Posterior cingulate gyrus (tissue), 11 donors: ENCODE measurements at regions of chr10 and their contacts with region 1.

Region 1: DNA sequence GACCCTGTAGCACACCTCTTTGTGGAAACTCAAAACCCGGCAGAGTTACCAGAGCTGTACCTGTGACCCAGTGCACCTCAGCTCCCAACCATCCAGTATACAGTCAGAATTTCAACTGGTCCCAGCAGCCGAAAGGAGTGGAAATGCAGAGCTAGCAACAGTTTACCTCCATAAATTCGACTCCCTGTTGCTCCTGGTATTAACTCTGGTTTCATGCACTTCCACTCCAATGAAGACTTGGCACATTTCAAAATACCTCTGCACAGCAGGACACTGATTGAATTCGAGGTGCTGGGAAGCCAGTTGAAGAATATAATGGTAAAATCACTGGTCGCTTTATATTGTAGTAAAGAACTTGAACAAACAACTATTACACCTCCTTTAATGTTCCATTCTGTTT is 17.9 kb upstream of the TIAL1 start:
- DNase-seq: no peak

Region 2: DNA sequence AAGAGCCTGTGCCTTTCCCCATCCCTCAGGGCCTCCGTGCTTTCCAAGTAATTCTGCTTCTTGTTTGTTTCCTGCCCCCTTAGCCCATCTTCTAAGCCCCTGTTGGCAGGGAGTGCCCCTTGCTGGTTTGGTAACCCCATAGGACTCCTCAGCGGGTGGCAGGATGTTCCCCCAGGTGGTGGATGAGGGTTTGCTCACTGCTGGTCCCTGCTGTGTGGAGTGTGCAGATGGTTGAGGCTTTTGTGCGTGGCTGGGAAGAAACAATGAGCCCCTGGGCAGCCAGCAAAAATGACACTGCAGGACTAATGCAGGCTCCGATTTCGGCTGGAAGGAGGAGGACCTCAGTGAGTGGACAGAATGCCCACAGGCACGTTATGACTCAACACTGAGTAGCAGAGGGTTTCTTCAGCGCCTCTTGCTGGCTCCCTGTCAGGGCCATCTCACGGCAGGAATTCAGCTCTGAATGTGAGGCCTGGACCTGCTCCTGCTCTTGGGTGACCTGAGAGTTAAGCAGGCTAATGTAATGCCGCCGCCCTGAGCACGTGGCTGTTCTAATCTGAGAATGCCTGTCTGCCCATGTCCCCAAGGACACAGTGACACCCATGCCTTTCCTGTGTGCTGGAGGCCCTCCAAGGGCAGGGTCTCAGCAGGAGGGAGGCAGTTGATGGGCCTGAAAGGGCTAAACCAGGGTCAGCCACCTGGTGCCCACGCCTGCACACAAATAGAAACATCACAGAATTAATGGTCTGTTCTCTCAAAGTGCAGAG is 53.1 kb after region 1 on chr10:
- intact Hi-C with region 1: loop called (anchors 5 kb)
- DNase-seq: peak in 2 of 10 donors; percentile 57 to 80

Region 3: GRCh38 chr10:119725828-119726675 is 111.4 kb after region 1 on chr10 and contains the start of gene INPP5F:
- intact Hi-C with region 1: no loop called
- DNase-seq: peak; percentile 96 to 100 (median 99)